Activated T-helper 2 cell treated with anti-CD3 and anti-CD28 coated beads, Interferon-gamma antibody, Interleukin-2, Interleukin-4, amounts not matched to agents 10 μg/mL and 5 μg/mL and 100 μg/mL, durations not matched to agents 14 hours and 24 hours and 36 hours (primary cell): ENCODE measurements at regions of chr9 and their contacts with region 1.

Region 1: DNA sequence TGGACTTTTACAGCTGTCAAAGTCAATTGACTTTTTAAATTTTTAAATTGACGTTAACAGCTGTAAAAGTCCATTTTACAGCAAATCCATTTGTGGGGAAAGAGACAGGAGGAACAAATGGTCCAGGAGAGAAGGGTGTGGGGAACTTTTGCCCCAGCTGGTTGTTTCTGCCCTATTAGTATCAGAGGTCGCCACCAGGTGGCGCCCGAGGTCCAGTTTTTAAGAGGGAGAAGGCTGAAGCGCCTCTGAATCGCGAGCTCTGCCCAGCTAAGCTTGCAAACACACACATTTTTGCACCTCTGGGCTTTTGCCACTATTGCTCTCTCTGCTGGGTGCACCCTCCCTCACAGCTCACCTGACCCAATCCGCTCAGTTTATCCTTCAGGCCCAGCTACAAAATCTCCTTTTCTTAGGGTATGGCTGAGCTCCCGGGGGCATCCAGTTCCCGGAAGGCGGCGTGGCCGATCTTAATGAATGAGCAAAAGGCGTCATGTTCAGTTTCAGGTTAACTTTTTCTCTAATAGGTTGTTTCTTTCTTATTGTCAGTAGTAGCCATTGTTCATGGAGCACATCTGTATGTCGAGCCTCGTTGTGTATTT is 6.3 kb upstream of the TTLL11 start:
- DNase-seq: peak; percentile 54
- H3K4me3 Mint-ChIP-seq: peak overlapping the region; percentile 47
- H3K27ac Mint-ChIP-seq: no peak overlapping the region
- H3K4me1 Mint-ChIP-seq: peaks cover 9% of the 10 kb centered on the region
- H3K27me3 Mint-ChIP-seq: peaks cover 22% of the 10 kb centered on the region

Region 2: GRCh38 chr9:122005597-122005996 is 93.8 kb before region 1 on chr9:
- intact Hi-C with region 1: no loop called
- DNase-seq: no peak
- H3K4me3 Mint-ChIP-seq: no peak overlapping the region
- H3K27ac Mint-ChIP-seq: no peak overlapping the region
- H3K4me1 Mint-ChIP-seq: no peaks in the 10 kb centered on the region
- H3K27me3 Mint-ChIP-seq: peaks cover 2% of the 10 kb centered on the region

Region 3: GRCh38 chr9:122125158-122125508 is 25.8 kb after region 1 on chr9:
- intact Hi-C with region 1: loop called (anchors 1 kb)
- DNase-seq: peak; percentile 63
- H3K4me3 Mint-ChIP-seq: no peak overlapping the region
- H3K27ac Mint-ChIP-seq: no peak overlapping the region
- H3K4me1 Mint-ChIP-seq: peaks cover 7% of the 10 kb centered on the region
- H3K27me3 Mint-ChIP-seq: peaks cover 30% of the 10 kb centered on the region